Activated B cell treated with CpG ODN at 0.5 μM for 24 hours (primary cell): ENCODE measurements at regions of chr9 and their contacts with region 1.

Region 1: GRCh38 chr9:99660191-99660708 is 161.4 kb upstream of the NR4A3 start:
- DNase-seq: peak; percentile 30
- ATAC-seq: peak; percentile 91
- H3K4me3 Mint-ChIP-seq: peak overlapping the region; percentile 21
- H3K27ac Mint-ChIP-seq: peak overlapping the region; percentile 92
- H3K4me1 Mint-ChIP-seq: peaks cover 31% of the 10 kb centered on the region
- H3K27me3 Mint-ChIP-seq: no peaks in the 10 kb centered on the region
- CTCF ChIP-seq: no peak

Region 2: DNA sequence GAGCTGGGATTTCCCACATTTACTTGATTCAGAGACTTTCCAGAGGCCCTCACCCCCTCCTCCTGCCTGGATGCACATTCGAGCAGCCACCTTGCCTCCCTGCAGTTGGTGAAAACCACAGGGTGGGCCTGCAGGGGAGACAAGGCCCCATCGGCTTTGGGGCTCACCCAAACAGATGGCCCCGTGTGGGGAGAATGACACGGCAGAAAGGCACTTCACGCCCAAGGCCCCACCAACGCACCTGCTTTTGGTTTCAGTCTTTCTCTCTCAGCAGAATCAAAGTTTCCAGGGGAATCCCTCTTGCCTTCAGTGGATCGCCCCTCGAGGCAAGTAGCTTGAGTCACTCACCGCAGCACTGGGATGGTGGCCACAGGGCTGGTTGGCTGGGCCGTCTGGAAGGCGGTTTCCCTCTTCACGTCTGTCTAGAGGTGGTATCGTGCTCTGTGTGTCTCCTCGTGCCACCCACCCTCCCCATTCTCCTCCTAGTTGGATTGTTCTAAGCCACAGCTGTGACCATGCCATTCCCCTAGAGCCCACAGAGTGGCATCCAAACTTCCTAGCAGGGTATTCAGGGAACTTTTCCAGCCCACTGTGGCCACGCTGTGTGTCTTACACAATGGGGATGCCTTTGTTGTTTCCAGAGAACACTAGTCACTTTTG is 406.3 kb before region 1 on chr9:
- CTCF ChIA-PET with region 1: no interaction called
- POLR2A ChIA-PET with region 1: no interaction called
- intact Hi-C with region 1: loop called (anchors 5 kb)
- DNase-seq: peak; percentile 73
- ATAC-seq: peak; percentile 87
- H3K4me3 Mint-ChIP-seq: peak overlapping the region; percentile 59
- H3K27ac Mint-ChIP-seq: peak overlapping the region; percentile 94
- H3K4me1 Mint-ChIP-seq: peaks cover 49% of the 10 kb centered on the region
- H3K27me3 Mint-ChIP-seq: no peaks in the 10 kb centered on the region
- CTCF ChIP-seq: no peak

Region 3: DNA sequence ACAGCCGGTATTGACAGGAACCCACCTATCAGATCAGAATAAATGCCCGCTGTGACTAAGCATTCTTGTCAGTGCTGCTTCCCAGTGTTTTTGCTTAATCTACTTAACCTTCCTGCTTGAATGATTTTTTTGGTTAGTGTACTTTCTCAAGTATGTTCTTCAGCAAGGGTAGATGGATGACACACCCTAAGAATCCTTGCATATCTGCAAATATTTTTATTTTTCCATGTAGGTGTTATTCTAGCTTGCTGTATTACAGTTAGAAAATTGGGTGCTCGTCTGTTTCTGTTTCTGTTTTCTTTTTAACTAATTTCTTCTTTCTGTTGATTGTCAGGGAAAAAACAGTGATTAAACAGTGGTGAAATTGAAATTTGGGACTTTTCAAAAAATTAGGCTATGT is 373.7 kb before region 1 on chr9:
- CTCF ChIA-PET with region 1: no interaction called
- POLR2A ChIA-PET with region 1: no interaction called
- intact Hi-C with region 1: no loop called
- DNase-seq: no peak
- ATAC-seq: no peak
- H3K4me3 Mint-ChIP-seq: no peak overlapping the region
- H3K27ac Mint-ChIP-seq: no peak overlapping the region
- H3K4me1 Mint-ChIP-seq: no peaks in the 10 kb centered on the region
- H3K27me3 Mint-ChIP-seq: peaks cover 8% of the 10 kb centered on the region
- CTCF ChIP-seq: no peak

Region 4: GRCh38 chr9:99513441-99514112 is 146.7 kb before region 1 on chr9:
- CTCF ChIA-PET with region 1: no interaction called
- POLR2A ChIA-PET with region 1: no interaction called
- intact Hi-C with region 1: loop called (anchors 1 kb)
- DNase-seq: peak; percentile 22
- ATAC-seq: peak; percentile 49
- H3K4me3 Mint-ChIP-seq: peak overlapping the region; percentile 61
- H3K27ac Mint-ChIP-seq: peak overlapping the region; percentile 84
- H3K4me1 Mint-ChIP-seq: peaks cover 88% of the 10 kb centered on the region
- H3K27me3 Mint-ChIP-seq: no peaks in the 10 kb centered on the region
- CTCF ChIP-seq: no peak

Region 5: DNA sequence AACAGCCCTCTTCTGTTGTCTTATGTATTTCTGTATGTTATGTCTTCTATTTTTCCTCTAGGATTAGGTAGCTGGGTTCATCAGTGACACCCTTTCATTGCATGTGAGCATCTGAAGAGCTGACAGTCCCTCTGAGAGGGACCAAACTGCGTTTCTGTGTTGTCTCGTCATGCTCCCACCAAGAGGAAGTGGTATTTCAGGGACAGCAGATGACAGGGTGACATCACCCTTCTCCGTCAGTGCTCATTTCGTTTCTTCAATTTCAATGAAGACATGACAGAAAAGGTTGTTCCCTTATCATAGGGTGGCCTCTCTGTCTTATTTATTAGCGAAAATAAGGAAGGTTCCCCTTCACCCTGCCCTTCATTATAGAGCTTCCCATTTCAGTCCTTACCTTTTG is 64.5 kb before region 1 on chr9:
- CTCF ChIA-PET with region 1: no interaction called
- POLR2A ChIA-PET with region 1: interaction called, 3 read pairs
- intact Hi-C with region 1: loop called (anchors 1 kb)
- DNase-seq: no peak
- ATAC-seq: peak; percentile 78
- H3K4me3 Mint-ChIP-seq: peak overlapping the region; percentile 21
- H3K27ac Mint-ChIP-seq: peak overlapping the region; percentile 85
- H3K4me1 Mint-ChIP-seq: peaks cover 54% of the 10 kb centered on the region
- H3K27me3 Mint-ChIP-seq: no peaks in the 10 kb centered on the region
- CTCF ChIP-seq: no peak

Region 6: DNA sequence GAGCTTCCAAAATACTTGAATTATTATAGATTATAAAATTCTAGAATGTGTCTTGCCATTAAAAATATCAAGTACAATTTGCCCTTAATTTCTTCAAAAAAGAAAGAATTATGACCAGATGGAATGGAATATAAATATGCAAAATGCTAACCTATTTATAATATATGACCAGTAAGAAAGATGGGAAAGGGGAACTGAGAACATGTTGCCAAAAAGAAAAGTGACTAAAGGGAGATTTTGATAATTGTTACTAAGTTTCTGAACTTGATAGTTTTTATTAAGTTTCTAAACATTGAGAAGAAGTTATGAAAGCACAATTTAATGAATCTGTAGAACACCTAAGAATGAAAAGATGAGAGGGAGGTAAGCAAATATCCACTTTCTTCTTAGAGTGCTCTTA is 27.0 kb before region 1 on chr9:
- CTCF ChIA-PET with region 1: no interaction called
- POLR2A ChIA-PET with region 1: no interaction called
- intact Hi-C with region 1: loop called (anchors 1 kb)
- DNase-seq: no peak
- ATAC-seq: peak; percentile 28
- H3K4me3 Mint-ChIP-seq: peak overlapping the region; percentile 66
- H3K27ac Mint-ChIP-seq: peak overlapping the region; percentile 90
- H3K4me1 Mint-ChIP-seq: peaks cover 39% of the 10 kb centered on the region
- H3K27me3 Mint-ChIP-seq: no peaks in the 10 kb centered on the region
- CTCF ChIP-seq: no peak

Region 7: GRCh38 chr9:99680191-99680590 is 19.9 kb after region 1 on chr9:
- CTCF ChIA-PET with region 1: interaction called, 3 read pairs
- POLR2A ChIA-PET with region 1: no interaction called
- intact Hi-C with region 1: loop called (anchors 2 kb)
- DNase-seq: no peak
- ATAC-seq: peak; percentile 58
- H3K4me3 Mint-ChIP-seq: peak overlapping the region; percentile 6
- H3K27ac Mint-ChIP-seq: no peak overlapping the region
- H3K4me1 Mint-ChIP-seq: peaks cover 27% of the 10 kb centered on the region
- H3K27me3 Mint-ChIP-seq: no peaks in the 10 kb centered on the region
- CTCF ChIP-seq: no peak

Region 8: GRCh38 chr9:99690573-99690972 is 30.3 kb after region 1 on chr9:
- CTCF ChIA-PET with region 1: no interaction called
- POLR2A ChIA-PET with region 1: no interaction called
- intact Hi-C with region 1: no loop called
- DNase-seq: no peak
- ATAC-seq: no peak
- H3K4me3 Mint-ChIP-seq: no peak overlapping the region
- H3K27ac Mint-ChIP-seq: no peak overlapping the region
- H3K4me1 Mint-ChIP-seq: no peaks in the 10 kb centered on the region
- H3K27me3 Mint-ChIP-seq: no peaks in the 10 kb centered on the region
- CTCF ChIP-seq: no peak

Region 9: DNA sequence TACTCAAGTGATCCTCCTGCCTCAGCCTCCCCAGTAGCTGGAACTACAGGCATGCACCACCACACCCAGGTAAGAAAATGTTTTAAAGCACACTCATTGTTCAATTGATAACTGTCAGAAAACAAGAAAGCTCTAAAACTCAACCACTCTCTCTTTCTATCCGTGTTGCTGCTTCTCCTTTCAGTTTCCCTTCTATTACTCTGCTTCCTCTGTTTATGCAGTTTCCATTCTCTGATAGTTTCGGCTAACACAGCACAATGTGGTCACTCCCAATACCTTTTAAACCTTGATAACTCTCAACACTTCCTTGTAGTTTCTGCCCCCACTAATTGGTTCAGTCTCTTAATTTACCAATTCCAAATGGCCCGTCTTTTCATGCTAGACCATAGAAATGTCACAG is 102.2 kb after region 1 on chr9:
- CTCF ChIA-PET with region 1: no interaction called
- POLR2A ChIA-PET with region 1: no interaction called
- intact Hi-C with region 1: loop called (anchors 1 kb)
- DNase-seq: no peak
- ATAC-seq: peak; percentile 98
- H3K4me3 Mint-ChIP-seq: no peak overlapping the region
- H3K27ac Mint-ChIP-seq: no peak overlapping the region
- H3K4me1 Mint-ChIP-seq: no peaks in the 10 kb centered on the region
- H3K27me3 Mint-ChIP-seq: no peaks in the 10 kb centered on the region
- CTCF ChIP-seq: no peak